IMR-90 (cell line): ENCODE measurements at regions of chr21 and their contacts with region 1.

Region 1: DNA sequence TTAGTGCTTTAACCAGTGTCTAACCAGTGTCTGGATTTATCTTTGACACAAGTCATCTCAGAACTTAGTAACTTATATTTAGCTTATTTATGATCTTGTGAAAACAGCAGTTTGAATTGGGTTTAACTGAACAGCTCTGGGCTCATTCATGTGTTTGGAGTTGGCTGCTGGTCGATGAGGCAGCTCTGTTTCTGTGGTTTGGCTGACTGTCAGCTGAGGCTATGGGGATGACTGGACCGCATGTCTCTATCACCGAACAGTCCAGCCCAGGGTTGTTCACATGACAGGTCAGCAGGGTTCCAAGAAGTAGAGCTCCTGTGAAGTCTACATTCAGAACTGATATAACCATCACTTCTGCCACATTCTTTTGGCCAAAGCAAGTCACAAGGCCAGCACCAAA is 29.1 kb upstream of the C21orf91 start:
- DNase-seq: peak; percentile 97
- ATAC-seq: peak; percentile 90
- H3K4me3 ChIP-seq: no peak overlapping the region
- H3K27ac ChIP-seq: peak overlapping the region; percentile 48
- H3K4me1 ChIP-seq: peaks cover 7% of the 10 kb centered on the region
- H3K27me3 ChIP-seq: no peaks in the 10 kb centered on the region
- CTCF ChIP-seq: no peak
- POLR2A ChIP-seq: no peak
- RAD21 ChIP-seq: no peak

Region 2: DNA sequence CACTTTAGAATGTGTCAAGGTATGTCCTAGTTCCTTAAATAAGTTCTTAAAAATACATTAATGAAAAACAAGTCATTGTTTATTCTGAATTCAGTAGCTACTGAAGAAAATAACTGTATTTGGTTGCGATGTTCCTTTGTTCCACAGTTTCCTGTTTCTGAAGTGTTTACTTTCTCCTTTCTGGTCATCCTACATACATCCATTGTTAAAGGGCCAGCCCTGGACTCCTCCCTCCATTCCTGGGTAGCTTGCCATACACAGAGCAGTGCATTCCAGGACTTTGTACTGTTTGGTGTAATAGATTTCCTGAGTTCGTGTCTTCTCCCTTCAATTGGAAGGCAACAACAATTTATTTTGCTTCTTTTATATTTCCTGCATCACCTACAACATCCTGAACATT is 1180.8 kb before region 1 on chr21:
- CTCF ChIA-PET with region 1: no interaction called
- POLR2A ChIA-PET with region 1: no interaction called
- dilution Hi-C with region 1: no loop called
- in situ Hi-C with region 1: no loop called
- intact Hi-C with region 1: no loop called
- DNase-seq: no peak
- ATAC-seq: no peak
- H3K4me3 ChIP-seq: no peak overlapping the region
- H3K27ac ChIP-seq: no peak overlapping the region
- H3K4me1 ChIP-seq: no peaks in the 10 kb centered on the region
- H3K27me3 ChIP-seq: no peaks in the 10 kb centered on the region
- CTCF ChIP-seq: no peak
- POLR2A ChIP-seq: no peak
- RAD21 ChIP-seq: no peak

Region 3: DNA sequence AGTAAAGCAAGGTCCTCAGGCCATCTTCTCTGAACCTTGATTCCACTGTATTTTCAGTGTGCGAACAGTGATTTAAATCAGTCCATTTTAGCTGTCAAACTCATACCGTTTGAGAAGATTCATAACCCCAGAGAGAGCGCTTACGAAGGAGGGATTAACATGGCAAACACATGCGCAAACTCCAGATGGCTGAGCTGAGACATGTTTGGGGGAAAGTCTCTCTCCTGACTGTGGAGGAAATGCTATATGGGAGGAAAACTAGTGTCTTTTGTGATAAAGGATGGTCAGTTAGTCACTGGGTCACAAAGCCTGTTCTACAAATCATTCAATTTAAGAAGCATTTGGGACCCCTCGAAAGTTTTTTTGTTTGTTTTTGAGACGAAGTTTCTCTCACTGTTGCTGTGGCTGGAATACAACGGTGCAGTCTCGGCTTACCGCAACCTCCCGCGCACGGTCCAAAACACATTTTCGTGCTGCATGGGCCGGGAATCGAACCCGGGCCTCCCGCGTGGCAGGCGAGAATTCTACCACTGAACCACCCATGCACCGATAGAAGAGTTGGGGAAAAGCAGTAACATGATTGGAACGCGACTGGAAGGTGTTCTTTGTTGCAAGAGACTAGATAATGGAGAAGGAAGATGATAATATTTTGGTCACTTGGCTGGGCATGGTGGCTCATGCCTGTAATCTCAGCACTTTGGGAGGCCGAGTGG is 393.8 kb before region 1 on chr21:
- CTCF ChIA-PET with region 1: no interaction called
- POLR2A ChIA-PET with region 1: no interaction called
- dilution Hi-C with region 1: no loop called
- in situ Hi-C with region 1: loop called (anchors 25 kb)
- intact Hi-C with region 1: no loop called
- DNase-seq: peak; percentile 92
- ATAC-seq: peak; percentile 97
- H3K4me3 ChIP-seq: no peak overlapping the region
- H3K27ac ChIP-seq: no peak overlapping the region
- H3K4me1 ChIP-seq: peaks cover 3% of the 10 kb centered on the region; the same call in 1 of the 2 replicates
- H3K27me3 ChIP-seq: no peaks in the 10 kb centered on the region
- CTCF ChIP-seq: no peak
- POLR2A ChIP-seq: no peak
- RAD21 ChIP-seq: no peak

Region 4: DNA sequence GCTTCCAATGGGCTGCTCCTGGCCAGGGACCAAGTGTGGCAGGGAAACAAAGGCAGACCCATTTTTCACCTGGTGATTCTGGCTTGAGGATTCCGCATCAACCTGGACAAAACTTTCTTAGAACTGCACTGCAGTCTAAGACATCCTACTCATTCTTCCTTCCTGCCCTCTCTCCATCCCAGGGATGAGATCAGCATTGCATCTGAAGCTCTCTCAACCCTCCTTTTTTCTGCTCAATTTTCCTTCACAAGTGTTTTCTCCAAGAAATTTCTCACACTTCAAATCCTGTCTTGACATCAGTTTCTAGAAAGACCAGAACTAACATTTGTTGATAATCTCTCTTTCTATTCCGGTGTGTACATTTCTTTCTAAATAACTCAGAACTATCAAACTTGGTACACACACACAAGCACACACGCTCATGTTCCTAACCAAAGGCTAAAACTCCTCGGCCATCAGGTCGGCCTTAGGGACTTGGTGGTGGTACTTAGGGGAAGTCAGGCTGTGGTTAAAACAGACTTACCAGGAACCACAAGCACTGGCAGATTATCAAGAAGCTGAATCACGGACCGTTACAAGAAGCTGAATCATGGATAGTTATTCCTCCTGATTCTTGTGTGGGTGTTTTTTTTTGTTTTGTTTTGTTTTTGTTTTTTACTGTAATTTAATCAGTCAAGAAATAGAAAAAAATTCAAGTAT is 356.4 kb before region 1 on chr21:
- CTCF ChIA-PET with region 1: no interaction called
- POLR2A ChIA-PET with region 1: no interaction called
- dilution Hi-C with region 1: no loop called
- in situ Hi-C with region 1: no loop called
- intact Hi-C with region 1: loop called (anchors 10 kb)
- DNase-seq: peak; percentile 99
- ATAC-seq: peak; percentile 92
- H3K4me3 ChIP-seq: no peak overlapping the region
- H3K27ac ChIP-seq: peak overlapping the region; percentile 22
- H3K4me1 ChIP-seq: peaks cover 10% of the 10 kb centered on the region
- H3K27me3 ChIP-seq: no peaks in the 10 kb centered on the region
- CTCF ChIP-seq: no peak
- POLR2A ChIP-seq: no peak
- RAD21 ChIP-seq: no peak

Region 5: DNA sequence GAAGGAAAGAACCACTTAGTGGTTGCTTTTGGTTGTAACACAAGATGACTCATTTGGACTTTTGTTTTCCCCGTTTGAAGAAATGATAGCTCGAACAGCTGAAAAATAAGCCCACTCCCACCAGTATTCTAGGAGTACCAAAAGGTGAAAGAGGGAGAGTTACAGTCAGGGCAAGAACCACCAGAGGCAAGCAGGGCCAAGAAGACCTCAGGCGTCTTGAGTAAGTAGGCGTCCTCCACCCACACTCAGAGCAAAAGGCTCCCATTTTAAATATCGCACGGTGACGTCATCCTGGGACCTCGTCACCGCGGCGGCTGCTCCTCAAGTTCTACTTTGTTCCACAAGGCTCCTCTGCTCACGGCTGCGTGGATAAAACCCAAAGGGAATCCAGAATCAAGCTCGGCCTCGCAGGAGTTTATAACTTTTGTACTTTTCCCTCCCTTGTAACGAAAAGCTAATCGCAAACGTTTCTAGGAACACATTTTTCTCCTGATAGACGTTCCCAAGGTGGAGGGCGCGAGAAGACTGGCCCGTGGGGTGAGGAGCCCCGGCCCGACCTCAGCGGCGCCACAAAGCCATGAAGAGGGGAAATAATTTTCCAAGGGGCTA is 236.7 kb before region 1 on chr21:
- CTCF ChIA-PET with region 1: no interaction called
- POLR2A ChIA-PET with region 1: no interaction called
- dilution Hi-C with region 1: no loop called
- in situ Hi-C with region 1: no loop called
- intact Hi-C with region 1: loop called (anchors 10 kb)
- DNase-seq: peak; percentile 94
- ATAC-seq: peak; percentile 67
- H3K4me3 ChIP-seq: peak overlapping the region; percentile 71
- H3K27ac ChIP-seq: peak overlapping the region; percentile 56
- H3K4me1 ChIP-seq: peaks cover 4% of the 10 kb centered on the region
- H3K27me3 ChIP-seq: no peaks in the 10 kb centered on the region
- CTCF ChIP-seq: no peak
- POLR2A ChIP-seq: peak; percentile 77
- RAD21 ChIP-seq: no peak

Region 6: GRCh38 chr21:17819114-17819876 is 28.9 kb before region 1 on chr21 and contains the start of gene C21orf91:
- CTCF ChIA-PET with region 1: interaction called, 3 read pairs
- POLR2A ChIA-PET with region 1: no interaction called
- dilution Hi-C with region 1: no loop called
- in situ Hi-C with region 1: no loop called
- intact Hi-C with region 1: loop called (anchors 2 kb)
- DNase-seq: peak; percentile 86
- ATAC-seq: peak; percentile 95
- H3K4me3 ChIP-seq: peak within 1 kb of the TSS; percentile 79
- H3K27ac ChIP-seq: peak within 1 kb of the TSS; percentile 94
- H3K4me1 ChIP-seq: peaks cover 4% of the 10 kb centered on the region
- H3K27me3 ChIP-seq: no peaks in the 10 kb centered on the region
- CTCF ChIP-seq: no peak
- POLR2A ChIP-seq: peak; percentile 93
- RAD21 ChIP-seq: no peak
- total RNA-seq, gene C21orf91: 9.3 and 13.1 TPM in 2 replicates

Region 7: DNA sequence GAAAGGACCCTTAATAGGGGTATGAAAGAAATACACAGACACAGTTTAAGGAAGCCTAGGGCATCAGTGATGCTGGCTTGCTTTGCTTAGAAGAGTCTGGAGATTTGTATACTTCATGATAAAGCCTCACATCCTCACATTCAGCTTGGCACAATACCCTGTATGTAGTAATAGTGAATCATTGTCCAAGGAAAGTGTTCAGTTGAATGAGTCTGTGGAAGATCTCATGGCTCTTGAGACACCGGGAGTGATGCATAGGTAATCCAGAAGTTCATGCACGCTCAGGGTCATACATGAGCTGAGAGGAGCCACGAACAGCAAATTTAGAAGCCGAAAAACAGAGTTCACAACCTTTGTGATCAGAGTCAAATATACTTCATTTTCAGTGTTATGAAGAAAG is 1092.6 kb after region 1 on chr21:
- CTCF ChIA-PET with region 1: no interaction called
- POLR2A ChIA-PET with region 1: no interaction called
- dilution Hi-C with region 1: no loop called
- in situ Hi-C with region 1: no loop called
- intact Hi-C with region 1: no loop called
- DNase-seq: no peak
- ATAC-seq: no peak
- H3K4me3 ChIP-seq: no peak overlapping the region
- H3K27ac ChIP-seq: no peak overlapping the region
- H3K4me1 ChIP-seq: no peaks in the 10 kb centered on the region
- H3K27me3 ChIP-seq: no peaks in the 10 kb centered on the region
- CTCF ChIP-seq: no peak
- POLR2A ChIP-seq: no peak
- RAD21 ChIP-seq: no peak